ENCODE measurements at regions of chr5 and their contacts with region 1.

Region 1: DNA sequence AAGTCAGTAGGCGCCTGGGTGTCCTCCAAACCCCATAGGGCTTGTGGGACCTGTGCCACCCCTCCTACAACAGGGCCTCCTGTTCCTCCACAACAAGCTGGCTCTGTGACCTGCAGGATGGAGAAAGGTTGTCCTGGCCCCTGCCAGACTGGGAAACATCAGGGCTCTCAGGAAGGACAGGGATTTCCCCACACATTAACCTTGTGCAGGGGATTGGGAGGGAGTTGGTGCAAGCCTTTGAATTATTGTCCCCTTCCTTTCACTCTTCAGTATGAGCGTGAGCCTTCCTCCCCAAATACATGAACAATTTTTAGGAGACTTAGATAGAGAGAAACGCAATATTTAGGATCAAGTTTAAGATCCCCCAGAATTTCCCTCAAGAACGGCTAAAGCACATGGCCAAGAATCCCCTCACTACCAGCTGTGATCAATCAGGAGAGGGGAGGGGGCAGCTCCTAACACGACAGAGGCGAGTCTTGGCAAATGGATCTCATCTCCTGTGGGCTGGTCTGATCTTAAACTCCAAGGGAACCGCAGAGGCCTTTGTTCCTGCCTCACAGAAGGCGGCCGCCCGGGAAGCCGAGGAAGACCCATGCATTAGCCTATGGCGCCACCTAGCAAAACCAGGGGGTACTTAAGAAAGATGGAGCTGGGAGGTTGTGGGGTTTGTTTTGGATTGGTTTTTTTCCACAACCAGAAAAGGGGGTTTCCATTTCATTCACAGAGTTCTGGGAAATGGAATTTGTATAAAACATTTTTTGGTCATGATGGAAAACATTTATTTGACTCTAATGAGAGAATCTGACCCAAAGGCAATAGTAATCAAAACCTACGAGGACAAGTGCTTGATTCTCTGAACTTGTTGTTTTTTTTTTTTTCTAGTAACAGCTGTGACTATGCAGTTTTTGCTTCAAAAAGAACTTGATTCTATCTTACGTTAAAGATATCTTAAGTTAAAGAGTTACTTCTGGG is 36.1 kb upstream of the OSMR start:
- DNase-seq: peak; percentile 77
- ATAC-seq: peak; percentile 69
- H3K4me3 Mint-ChIP-seq: no peak overlapping the region
- H3K27ac Mint-ChIP-seq: no peak overlapping the region
- H3K4me1 Mint-ChIP-seq: peaks cover 8% of the 10 kb centered on the region
- H3K27me3 Mint-ChIP-seq: peaks cover 27% of the 10 kb centered on the region
- CTCF ChIP-seq: peak; percentile 77

Region 2: DNA sequence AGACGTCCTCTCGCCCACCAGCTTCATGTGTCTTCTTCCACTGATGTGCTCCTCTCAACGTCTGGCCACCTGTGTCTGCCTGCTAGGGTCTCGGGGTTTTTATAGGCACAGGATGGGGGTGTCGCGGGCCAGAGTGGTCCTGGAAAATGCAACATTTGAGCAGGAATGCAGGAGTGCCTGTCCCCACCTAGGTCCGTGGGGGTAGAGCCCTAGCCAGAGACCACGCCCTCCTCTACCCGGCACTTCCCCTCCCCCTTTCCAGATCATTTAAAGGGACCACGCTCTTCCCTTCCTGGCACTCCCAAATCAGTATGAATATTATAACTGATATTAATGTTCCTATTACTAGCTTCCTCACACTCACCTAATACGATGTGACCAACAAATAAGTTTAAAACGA is 11.8 kb before region 1 on chr5:
- CTCF ChIA-PET with region 1: interaction called, 10 read pairs
- POLR2A ChIA-PET with region 1: no interaction called
- intact Hi-C with region 1: no loop called
- DNase-seq: no peak
- ATAC-seq: no peak
- H3K4me3 Mint-ChIP-seq: no peak overlapping the region
- H3K27ac Mint-ChIP-seq: no peak overlapping the region
- H3K4me1 Mint-ChIP-seq: no peaks in the 10 kb centered on the region
- H3K27me3 Mint-ChIP-seq: peaks cover 22% of the 10 kb centered on the region
- CTCF ChIP-seq: no peak

Measured in activated CD8-positive, alpha-beta T cell treated with anti-CD3 and anti-CD28 coated beads for 36 hours (primary cell).